ENCODE measurements at regions of chr1 and their contacts with region 1.

Region 1: GRCh38 chr1:24930204-24931145 is at the start of gene RUNX3:
- DNase-seq: peak; percentile 88
- H3K4me3 ChIP-seq: peak within 1 kb of the TSS; percentile 71
- H3K27ac ChIP-seq: peak within 1 kb of the TSS; percentile 59
- H3K4me1 ChIP-seq: peaks cover 19% of the 10 kb centered on the region
- H3K27me3 ChIP-seq: no peaks in the 10 kb centered on the region
- CTCF ChIP-seq: peak; percentile 36; the same call in 1 of the 2 replicates
- total RNA-seq, gene RUNX3: 8.6 and 10.2 TPM in 2 replicates

Region 2: DNA sequence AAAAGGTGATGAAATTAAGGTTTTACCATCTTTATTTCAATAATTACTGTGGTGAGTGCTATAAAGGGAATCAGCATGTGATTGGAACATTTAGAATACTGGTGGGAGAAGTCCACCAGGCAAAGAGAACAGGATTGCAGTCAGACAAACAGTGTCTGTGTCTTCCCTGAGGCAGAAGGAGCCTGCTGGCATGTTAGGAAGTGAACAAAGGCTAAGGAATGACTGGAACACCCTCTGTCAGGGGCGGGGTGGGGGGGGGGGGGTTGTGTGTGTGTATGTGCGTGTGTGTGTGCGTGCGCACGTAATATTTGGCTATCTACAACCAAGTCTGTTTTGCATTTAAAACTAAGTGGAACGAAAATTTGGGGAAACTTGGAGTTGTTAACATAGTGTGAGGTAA is 257.1 kb before region 1 on chr1:
- CTCF ChIA-PET with region 1: no interaction called
- POLR2A ChIA-PET with region 1: no interaction called
- intact Hi-C with region 1: no loop called
- DNase-seq: no peak
- H3K4me3 ChIP-seq: no peak overlapping the region
- H3K27ac ChIP-seq: no peak overlapping the region
- H3K4me1 ChIP-seq: no peaks in the 10 kb centered on the region
- H3K27me3 ChIP-seq: no peaks in the 10 kb centered on the region
- CTCF ChIP-seq: no peak

Region 3: DNA sequence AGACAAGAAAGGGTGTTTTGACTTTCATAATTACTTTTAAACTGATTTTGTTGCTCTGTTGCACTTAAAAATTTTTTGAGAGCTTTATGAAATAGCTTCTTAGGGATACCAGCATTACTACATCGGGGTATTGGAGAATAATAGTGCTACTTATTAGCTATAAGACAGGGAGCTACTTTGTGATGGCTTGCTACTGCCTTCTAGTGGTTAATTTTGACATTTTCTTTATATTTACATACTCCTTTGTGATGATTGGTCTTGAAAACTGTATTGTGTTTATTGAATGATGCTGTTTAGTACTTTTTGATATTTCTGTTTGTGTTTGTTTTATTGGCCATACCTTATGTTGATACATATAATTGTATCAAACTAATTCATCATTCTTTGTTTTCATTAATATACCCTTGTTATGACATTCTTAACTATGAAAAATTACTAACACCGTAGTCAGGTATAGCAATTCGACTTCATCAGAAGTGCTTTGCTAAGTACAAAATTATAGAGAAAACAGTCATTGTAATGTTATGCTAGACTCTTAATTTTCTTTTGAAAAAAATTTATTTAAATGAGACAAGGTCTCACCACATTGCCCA is 99.7 kb before region 1 on chr1:
- CTCF ChIA-PET with region 1: interaction called, 15 read pairs
- POLR2A ChIA-PET with region 1: no interaction called
- intact Hi-C with region 1: no loop called
- DNase-seq: peak; percentile 82
- H3K4me3 ChIP-seq: no peak overlapping the region
- H3K27ac ChIP-seq: no peak overlapping the region
- H3K4me1 ChIP-seq: peaks cover 47% of the 10 kb centered on the region
- H3K27me3 ChIP-seq: no peaks in the 10 kb centered on the region
- CTCF ChIP-seq: peak; percentile 81

Region 4: GRCh38 chr1:25037174-25038074 is 106.9 kb after region 1 on chr1:
- CTCF ChIA-PET with region 1: no interaction called
- POLR2A ChIA-PET with region 1: no interaction called
- intact Hi-C with region 1: loop called (anchors 5 kb)
- DNase-seq: peak; percentile 55
- H3K4me3 ChIP-seq: no peak overlapping the region
- H3K27ac ChIP-seq: no peak overlapping the region
- H3K4me1 ChIP-seq: peaks cover 5% of the 10 kb centered on the region
- H3K27me3 ChIP-seq: no peaks in the 10 kb centered on the region
- CTCF ChIP-seq: peak; percentile 66

Region 5: GRCh38 chr1:25100151-25100833 is 169.8 kb after region 1 on chr1:
- CTCF ChIA-PET with region 1: no interaction called
- POLR2A ChIA-PET with region 1: no interaction called
- intact Hi-C with region 1: loop called (anchors 2 kb)
- DNase-seq: no peak
- H3K4me3 ChIP-seq: no peak overlapping the region
- H3K27ac ChIP-seq: no peak overlapping the region
- H3K4me1 ChIP-seq: no peaks in the 10 kb centered on the region
- H3K27me3 ChIP-seq: no peaks in the 10 kb centered on the region
- CTCF ChIP-seq: no peak

Region 6: DNA sequence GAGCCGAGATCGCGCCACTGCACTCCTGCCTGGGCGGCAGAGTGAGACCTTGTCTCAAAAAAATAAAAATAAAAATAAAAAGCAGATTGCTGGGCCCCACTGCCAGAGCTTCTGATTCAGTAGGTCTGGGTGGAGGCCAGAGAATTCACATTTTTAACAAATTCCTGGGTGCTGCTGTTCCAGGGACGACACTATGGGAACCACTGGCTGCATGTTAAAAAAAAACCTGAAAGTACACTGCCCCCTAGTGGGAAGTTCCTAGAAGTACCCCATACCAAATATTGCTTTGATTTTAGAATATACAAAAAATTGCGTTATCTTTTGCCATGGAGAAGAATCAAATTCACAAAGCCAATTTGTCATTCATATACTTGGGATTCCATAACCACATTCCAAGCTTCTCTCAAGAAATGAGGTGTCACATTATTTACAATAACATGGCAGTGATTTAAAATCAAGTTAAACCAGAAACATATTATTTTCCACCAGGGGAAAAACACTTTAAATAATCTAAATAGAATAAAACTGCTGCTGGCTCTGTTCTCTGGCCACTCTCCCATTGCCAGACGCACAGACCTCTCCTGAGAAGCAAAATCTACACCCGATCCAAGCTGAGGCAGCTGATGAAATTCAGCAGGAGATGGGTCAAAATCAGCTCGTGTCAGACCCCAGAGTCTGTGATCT is 274.5 kb after region 1 on chr1:
- CTCF ChIA-PET with region 1: no interaction called
- POLR2A ChIA-PET with region 1: no interaction called
- intact Hi-C with region 1: loop called (anchors 5 kb)
- DNase-seq: peak; percentile 73
- H3K4me3 ChIP-seq: no peak overlapping the region
- H3K27ac ChIP-seq: no peak overlapping the region
- H3K4me1 ChIP-seq: no peaks in the 10 kb centered on the region
- H3K27me3 ChIP-seq: no peaks in the 10 kb centered on the region
- CTCF ChIP-seq: peak; percentile 73

Region 7: DNA sequence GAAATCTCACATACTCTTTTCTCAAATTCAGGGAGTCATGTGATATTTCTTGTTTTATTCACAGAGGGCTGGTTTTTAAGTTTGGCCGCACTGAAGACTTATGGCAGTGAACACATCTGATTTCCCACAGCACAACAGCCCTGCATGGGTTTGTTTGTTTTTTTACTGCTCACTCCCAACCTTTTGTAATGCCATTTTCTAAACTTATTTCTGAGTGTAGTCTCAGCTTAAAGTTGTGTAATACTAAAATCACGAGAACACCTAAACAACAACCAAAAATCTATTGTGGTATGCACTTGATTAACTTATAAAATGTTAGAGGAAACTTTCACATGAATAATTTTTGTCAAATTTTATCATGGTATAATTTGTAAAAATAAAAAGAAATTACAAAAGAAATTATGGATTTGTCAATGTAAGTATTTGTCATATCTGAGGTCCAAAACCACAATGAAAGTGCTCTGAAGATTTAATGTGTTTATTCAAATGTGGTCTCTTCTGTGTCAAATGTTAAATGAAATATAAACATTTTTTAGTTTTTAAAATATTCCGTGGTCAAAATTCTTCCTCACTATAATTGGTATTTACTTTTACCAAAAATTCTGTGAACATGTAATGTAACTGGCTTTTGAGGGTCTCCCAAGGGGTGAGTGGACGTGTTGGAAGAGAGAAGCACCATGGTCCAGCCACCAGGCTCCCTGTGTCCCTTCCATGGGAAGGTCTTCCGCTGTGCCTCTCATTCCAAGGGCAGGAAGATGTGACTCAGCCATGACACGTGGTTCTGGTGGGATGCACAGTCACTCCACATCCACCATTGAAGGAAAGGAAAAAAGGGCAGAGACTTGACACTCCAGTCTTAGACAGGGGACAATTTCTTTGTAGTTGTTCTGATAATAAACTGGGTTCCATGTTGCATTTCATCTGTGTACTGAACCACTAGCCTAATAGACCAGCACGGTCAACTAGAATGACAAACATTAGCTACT is 430.4 kb after region 1 on chr1:
- CTCF ChIA-PET with region 1: no interaction called
- POLR2A ChIA-PET with region 1: no interaction called
- intact Hi-C with region 1: no loop called
- DNase-seq: no peak
- H3K4me3 ChIP-seq: no peak overlapping the region
- H3K27ac ChIP-seq: no peak overlapping the region
- H3K4me1 ChIP-seq: no peaks in the 10 kb centered on the region
- H3K27me3 ChIP-seq: no peaks in the 10 kb centered on the region
- CTCF ChIP-seq: no peak

Measured in A673 (cell line).